PC-9 (cell line): ENCODE measurements at regions of chr12 and their contacts with region 1.

Region 1: GRCh38 chr12:27523642-27524493 is at the start of gene PPFIBP1:
- DNase-seq: peak; percentile 94 to 98
- H3K4me3 ChIP-seq: peak within 1 kb of the TSS; percentile 96
- H3K27ac ChIP-seq: peak within 1 kb of the TSS; percentile 71
- H3K4me1 ChIP-seq: peaks cover 14% of the 10 kb centered on the region
- H3K27me3 ChIP-seq: no peaks in the 10 kb centered on the region
- CTCF ChIP-seq: no peak; the same call in 1 of the 2 replicates
- total RNA-seq, gene PPFIBP1: 77.0 and 85.0 TPM in 2 replicates

Region 2: GRCh38 chr12:27081668-27082111 is 442.2 kb before region 1 on chr12:
- CTCF ChIA-PET with region 1: no interaction called
- POLR2A ChIA-PET with region 1: no interaction called
- intact Hi-C with region 1: no loop called
- DNase-seq: no peak
- H3K4me3 ChIP-seq: no peak overlapping the region
- H3K27ac ChIP-seq: no peak overlapping the region
- H3K4me1 ChIP-seq: peaks cover 15% of the 10 kb centered on the region
- H3K27me3 ChIP-seq: no peaks in the 10 kb centered on the region
- CTCF ChIP-seq: no peak; the same call in 1 of the 2 replicates

Region 3: GRCh38 chr12:27332407-27333301 is 191.2 kb before region 1 on chr12 and contains the start of gene BMAL2:
- CTCF ChIA-PET with region 1: interaction called, 3 read pairs
- POLR2A ChIA-PET with region 1: interaction called, 6 read pairs
- intact Hi-C with region 1: loop called (anchors 10 kb)
- DNase-seq: peak in 1 of 2 experiments; percentile 79
- H3K4me3 ChIP-seq: peak within 1 kb of the TSS; percentile 80
- H3K27ac ChIP-seq: peak within 1 kb of the TSS; percentile 93
- H3K4me1 ChIP-seq: peaks cover 66% of the 10 kb centered on the region
- H3K27me3 ChIP-seq: no peaks in the 10 kb centered on the region
- CTCF ChIP-seq: no peak
- total RNA-seq, gene BMAL2: 56.7 and 87.9 TPM in 2 replicates

Region 4: GRCh38 chr12:27549801-27550652 is 26.2 kb after region 1 on chr12:
- CTCF ChIA-PET with region 1: interaction called, 6 read pairs
- POLR2A ChIA-PET with region 1: interaction called, 4 read pairs
- intact Hi-C with region 1: loop called (anchors 1 kb)
- DNase-seq: peak; percentile 82 to 95
- H3K4me3 ChIP-seq: peak overlapping the region; percentile 52; the same call in 1 of the 2 replicates
- H3K27ac ChIP-seq: peak overlapping the region; percentile 98
- H3K4me1 ChIP-seq: peaks cover 38% of the 10 kb centered on the region
- H3K27me3 ChIP-seq: no peaks in the 10 kb centered on the region
- CTCF ChIP-seq: no peak

Region 5: DNA sequence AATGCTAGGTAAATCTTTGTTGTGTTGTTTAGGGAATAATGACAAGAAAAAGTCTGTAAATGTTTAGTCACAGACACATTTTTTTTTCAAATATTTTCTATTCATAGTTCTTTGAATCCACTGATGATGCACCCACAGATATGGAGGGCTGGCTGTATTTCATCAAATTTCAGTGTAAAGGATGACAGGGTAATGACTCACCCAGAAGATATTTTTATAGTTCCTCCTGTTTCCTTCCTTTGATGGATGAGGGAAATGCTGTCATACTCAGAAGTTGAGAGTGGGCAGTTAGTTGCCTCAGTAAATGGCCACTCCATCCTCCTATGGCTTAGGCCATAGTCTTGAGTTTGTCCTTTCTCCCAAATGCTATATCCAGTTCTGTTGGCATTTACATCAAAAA is 95.4 kb after region 1 on chr12:
- CTCF ChIA-PET with region 1: no interaction called
- POLR2A ChIA-PET with region 1: interaction called, 5 read pairs
- intact Hi-C with region 1: loop called (anchors 1 kb)
- DNase-seq: peak; percentile 34 to 86
- H3K4me3 ChIP-seq: no peak overlapping the region
- H3K27ac ChIP-seq: peak overlapping the region; percentile 55
- H3K4me1 ChIP-seq: peaks cover 25% of the 10 kb centered on the region
- H3K27me3 ChIP-seq: no peaks in the 10 kb centered on the region
- CTCF ChIP-seq: no peak

Region 6: GRCh38 chr12:27635349-27635972 is 111.6 kb after region 1 on chr12:
- CTCF ChIA-PET with region 1: no interaction called
- POLR2A ChIA-PET with region 1: interaction called, 5 read pairs
- intact Hi-C with region 1: loop called (anchors 1 kb)
- DNase-seq: peak in 1 of 2 experiments; percentile 59
- H3K4me3 ChIP-seq: no peak overlapping the region
- H3K27ac ChIP-seq: no peak overlapping the region
- H3K4me1 ChIP-seq: no peaks in the 10 kb centered on the region
- H3K27me3 ChIP-seq: no peaks in the 10 kb centered on the region
- CTCF ChIP-seq: peak; percentile 77

Region 7: GRCh38 chr12:29317556-29318363 is 1793.9 kb after region 1 on chr12:
- CTCF ChIA-PET with region 1: no interaction called
- POLR2A ChIA-PET with region 1: interaction called, 11 read pairs
- intact Hi-C with region 1: no loop called
- DNase-seq: peak; percentile 44 to 79
- H3K4me3 ChIP-seq: no peak overlapping the region
- H3K27ac ChIP-seq: no peak overlapping the region
- H3K4me1 ChIP-seq: peaks cover 8% of the 10 kb centered on the region; the same call in 1 of the 2 replicates
- H3K27me3 ChIP-seq: no peaks in the 10 kb centered on the region
- CTCF ChIP-seq: peak; percentile 87